ENCODE measurements at regions of chr9 and their contacts with region 1.

Region 1: DNA sequence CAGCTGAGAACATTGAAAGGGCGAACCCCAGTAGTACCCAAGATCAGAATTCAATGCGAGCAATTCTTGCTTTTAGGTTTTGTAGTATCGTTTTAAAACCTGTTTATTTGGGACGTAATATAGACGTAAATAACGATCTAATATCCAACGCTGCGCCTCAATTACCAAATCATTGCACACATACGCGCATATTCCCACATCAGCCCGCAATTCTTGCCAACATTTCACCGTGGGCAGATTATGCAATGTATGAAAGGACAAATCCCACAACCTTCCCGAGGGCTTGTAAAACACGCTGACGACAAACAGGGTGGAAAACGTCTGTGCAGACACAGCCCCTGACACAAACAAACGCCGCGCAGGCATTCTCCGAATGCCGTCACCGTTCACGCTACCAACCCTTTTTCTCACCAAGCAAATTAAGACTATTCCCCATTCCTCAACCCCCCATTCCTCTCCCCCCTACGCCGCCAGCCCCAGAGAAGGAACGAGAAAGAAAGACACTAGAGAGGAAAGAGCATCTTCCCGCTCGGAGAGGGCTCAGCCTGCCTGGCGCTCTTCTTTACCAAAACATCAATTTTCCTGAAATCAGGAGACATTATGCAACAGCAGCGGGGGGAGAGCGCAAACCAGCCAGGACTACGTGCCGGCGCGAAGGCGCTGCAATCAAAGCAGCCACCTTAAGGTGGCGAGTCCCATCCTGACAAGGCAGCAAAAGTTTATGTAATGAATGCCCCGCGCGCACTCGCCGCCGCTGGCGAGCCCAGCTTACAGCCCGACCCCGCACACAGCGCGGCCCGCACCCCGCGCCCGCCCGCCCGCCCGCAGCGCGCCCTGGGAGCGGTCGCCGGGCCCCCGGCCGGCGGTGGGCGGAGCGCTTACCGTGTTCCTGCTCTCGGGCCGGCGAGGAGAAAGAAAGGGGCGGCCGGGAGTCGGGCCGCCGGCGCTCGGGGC is 597 bp downstream of the NFIL3 start:
- DNase-seq: peak; percentile 75
- ATAC-seq: peak; percentile 30

Region 2: GRCh38 chr9:90914868-90915483 is 508.1 kb before region 1 on chr9:
- intact Hi-C with region 1: loop called (anchors 5 kb)
- DNase-seq: peak; percentile 75
- ATAC-seq: peak; percentile 93

Region 3: GRCh38 chr9:91036826-91037510 is 386.1 kb before region 1 on chr9:
- intact Hi-C with region 1: loop called (anchors 5 kb)
- DNase-seq: peak; percentile 84
- ATAC-seq: peak; percentile 98